Heart left ventricle (tissue), 16 donors: ENCODE measurements at regions of chr1 and their contacts with region 1.

Region 1: DNA sequence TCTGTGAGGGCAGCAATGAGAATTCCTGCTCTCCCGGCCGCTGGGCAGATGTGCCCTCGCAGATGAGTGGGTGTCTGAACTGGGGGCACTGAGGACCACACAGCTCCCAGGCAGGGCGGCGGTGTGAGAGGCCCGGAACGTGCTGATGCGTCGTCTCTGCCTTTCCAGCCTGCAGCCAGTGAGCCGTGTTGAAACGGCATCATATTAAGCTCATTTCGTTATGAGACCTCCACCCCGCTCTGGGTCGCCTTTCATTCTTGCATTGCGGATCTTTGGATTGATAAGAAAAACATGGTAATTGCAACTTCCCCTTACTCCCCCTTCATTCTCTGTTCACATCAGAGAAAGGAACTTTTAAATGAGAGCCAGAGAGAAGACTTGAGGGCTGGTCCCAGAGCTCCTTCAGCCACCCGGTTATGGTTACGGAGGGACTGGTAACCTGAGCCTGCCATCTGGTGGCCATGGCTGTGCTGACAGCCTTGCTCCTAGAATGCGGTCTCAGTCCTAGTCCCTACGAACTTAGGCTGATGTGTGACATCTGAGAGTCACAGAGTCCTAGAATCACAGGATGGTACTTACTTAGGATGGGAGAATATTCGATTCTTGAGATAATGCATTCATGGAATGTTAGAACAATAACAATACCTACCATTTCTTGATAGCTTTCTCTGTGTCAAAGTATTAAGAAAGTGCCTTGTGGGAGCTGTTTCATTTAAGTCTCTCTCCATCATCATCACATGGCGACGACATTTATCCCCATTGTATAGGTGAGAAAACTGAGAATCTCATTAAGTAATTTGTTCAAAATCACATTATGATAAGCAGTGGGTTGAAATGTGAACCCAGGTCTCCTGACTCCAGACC is 271.0 kb downstream of the TRABD2B start:
- DNase-seq: peak; percentile 68 to 79 (median 72)
- ATAC-seq: peak; percentile 82 to 93 (median 88)
- H3K4me3 ChIP-seq: peak overlapping the region in 8 of 12 donors; percentile 8 to 35 (median 30)
- H3K27ac ChIP-seq: no peak overlapping the region
- H3K4me1 ChIP-seq: peaks cover 0 to 17% (median 13%) of the 10 kb centered on the region in 12 donors
- H3K27me3 ChIP-seq: peaks cover 15 to 48% (median 28%) of the 10 kb centered on the region in 9 donors
- CTCF ChIP-seq: peak; percentile 80 to 96 (median 84)
- POLR2A ChIP-seq: no peak

Region 2: GRCh38 chr1:47388891-47389238 is 337.4 kb before region 1 on chr1:
- intact Hi-C with region 1: loop called in 4 of 10 experiments (anchors 5 kb)
- DNase-seq: peak in 4 of 5 donors; percentile 30 to 60 (median 41)
- ATAC-seq: peak; percentile 21 to 77 (median 70)
- H3K4me3 ChIP-seq: no peak overlapping the region
- H3K27ac ChIP-seq: no peak overlapping the region
- H3K4me1 ChIP-seq: peaks cover 0 to 10% (median 0%) of the 10 kb centered on the region in 12 donors
- H3K27me3 ChIP-seq: peaks cover 0 to 11% (median 0%) of the 10 kb centered on the region in 9 donors
- CTCF ChIP-seq: peak; percentile 50 to 70 (median 62)
- POLR2A ChIP-seq: no peak

Region 3: GRCh38 chr1:47432071-47433036 is 293.9 kb before region 1 on chr1:
- intact Hi-C with region 1: loop called in 7 of 10 experiments (anchors 5 kb)
- DNase-seq: peak; percentile 68 to 85 (median 73)
- ATAC-seq: peak; percentile 76 to 83 (median 79)
- H3K4me3 ChIP-seq: peak overlapping the region in 5 of 12 donors; percentile 22 to 42 (median 30)
- H3K27ac ChIP-seq: peak overlapping the region in 1 of 12 donors; percentile 40
- H3K4me1 ChIP-seq: peaks cover 4 to 50% (median 27%) of the 10 kb centered on the region in 12 donors
- H3K27me3 ChIP-seq: peaks cover 18 to 100% (median 76%) of the 10 kb centered on the region in 9 donors
- CTCF ChIP-seq: peak; percentile 54 to 83 (median 74)
- POLR2A ChIP-seq: no peak

Region 4: DNA sequence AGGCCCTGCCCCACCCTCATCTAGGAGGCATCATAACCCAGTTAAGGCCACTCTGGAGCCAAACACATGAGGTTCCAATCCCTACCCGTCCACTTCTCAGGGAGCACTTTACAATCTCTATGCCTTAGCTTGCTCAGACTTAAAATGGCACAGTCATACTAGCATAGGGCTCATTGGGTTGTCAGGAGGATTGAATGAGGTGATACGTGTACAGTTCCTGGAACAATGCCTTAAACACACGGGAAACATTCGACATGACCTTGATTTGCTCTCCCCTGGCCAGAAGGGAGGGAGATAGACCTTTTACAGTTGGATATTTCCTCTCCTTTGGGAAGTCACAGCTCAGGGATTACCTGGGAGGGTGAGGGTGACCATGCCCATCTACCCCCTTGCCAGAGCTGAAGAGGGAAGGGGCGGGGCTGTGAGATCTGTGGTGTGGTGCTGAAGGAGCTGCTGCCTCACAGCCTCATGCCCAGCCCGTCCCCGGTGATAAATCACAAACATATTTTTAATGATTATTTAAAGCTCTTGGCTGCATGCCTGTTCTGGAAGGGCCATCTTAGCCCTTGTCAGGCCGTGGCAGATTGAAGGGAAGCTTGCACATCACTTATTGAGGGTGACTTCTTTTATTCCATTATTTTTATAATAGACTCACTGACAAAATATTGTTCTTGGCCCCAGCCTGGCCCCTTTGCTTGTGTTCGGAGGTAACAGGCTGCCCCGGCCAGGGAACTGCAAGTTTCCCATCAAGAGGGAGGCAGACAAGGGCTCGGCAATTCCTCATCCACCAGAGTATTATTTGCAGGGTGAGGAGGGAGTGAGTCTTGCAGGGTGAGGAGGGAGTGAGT is 205.0 kb before region 1 on chr1:
- intact Hi-C with region 1: loop called in 4 of 10 experiments (anchors 5 to 10 kb)
- DNase-seq: no peak
- ATAC-seq: peak in 3 of 4 donors; percentile 9 to 38 (median 38)
- H3K4me3 ChIP-seq: no peak overlapping the region
- H3K27ac ChIP-seq: no peak overlapping the region
- H3K4me1 ChIP-seq: peaks cover 0 to 9% (median 0%) of the 10 kb centered on the region in 12 donors
- H3K27me3 ChIP-seq: peaks cover 0 to 19% (median 7%) of the 10 kb centered on the region in 9 donors
- CTCF ChIP-seq: no peak
- POLR2A ChIP-seq: no peak

Region 5: GRCh38 chr1:47527658-47528255 is 198.5 kb before region 1 on chr1:
- intact Hi-C with region 1: loop called in 4 of 10 experiments (anchors 5 to 10 kb)
- DNase-seq: no peak
- ATAC-seq: no peak
- H3K4me3 ChIP-seq: no peak overlapping the region
- H3K27ac ChIP-seq: no peak overlapping the region
- H3K4me1 ChIP-seq: peaks cover 0 to 6% (median 0%) of the 10 kb centered on the region in 12 donors
- H3K27me3 ChIP-seq: peaks cover 0 to 14% (median 4%) of the 10 kb centered on the region in 9 donors
- CTCF ChIP-seq: peak in 11 of 12 donors; percentile 23 to 54 (median 41)
- POLR2A ChIP-seq: no peak

Region 6: GRCh38 chr1:47656719-47657685 is 69.2 kb before region 1 on chr1:
- intact Hi-C with region 1: no loop called
- DNase-seq: peak in 2 of 5 donors; percentile 32 to 45
- ATAC-seq: peak; percentile 47 to 74 (median 60)
- H3K4me3 ChIP-seq: no peak overlapping the region
- H3K27ac ChIP-seq: peak overlapping the region in 11 of 12 donors; percentile 6 to 89 (median 46)
- H3K4me1 ChIP-seq: peaks cover 0 to 21% (median 0%) of the 10 kb centered on the region in 12 donors
- H3K27me3 ChIP-seq: peaks cover 0 to 18% (median 0%) of the 10 kb centered on the region in 9 donors
- CTCF ChIP-seq: no peak
- POLR2A ChIP-seq: no peak

Region 7: DNA sequence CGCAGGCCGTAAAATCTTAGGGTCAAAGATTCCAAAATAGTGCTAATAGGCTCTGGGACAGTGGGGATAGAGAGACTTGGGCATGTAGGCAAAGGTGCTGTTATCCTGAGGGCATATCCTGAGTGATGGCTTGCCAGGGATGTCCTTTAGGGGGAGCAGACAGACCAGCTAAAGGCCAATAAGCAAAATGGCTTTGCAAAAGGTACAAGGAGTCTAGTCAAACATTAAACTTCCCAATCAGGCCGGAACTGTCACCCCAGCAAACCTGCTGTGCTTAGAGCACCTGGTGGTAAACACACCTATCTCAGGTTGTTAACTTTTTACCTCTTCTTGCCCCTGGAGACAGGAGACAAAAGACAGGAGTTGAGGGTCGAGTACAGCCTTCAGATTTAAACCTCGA is 221.9 kb after region 1 on chr1:
- intact Hi-C with region 1: no loop called
- DNase-seq: no peak
- ATAC-seq: peak in 1 of 4 donors; percentile 44
- H3K4me3 ChIP-seq: no peak overlapping the region
- H3K27ac ChIP-seq: no peak overlapping the region
- H3K4me1 ChIP-seq: peaks cover 0 to 12% (median 0%) of the 10 kb centered on the region in 12 donors
- H3K27me3 ChIP-seq: no peaks in the 10 kb centered on the region
- CTCF ChIP-seq: peak in 5 of 12 donors; percentile 17 to 40 (median 28)
- POLR2A ChIP-seq: no peak